ENCODE measurements at regions of chr15 and their contacts with region 1.

Region 1: GRCh38 chr15:66946578-66947164 is 118.7 kb upstream of the SMAD3 start:
- DNase-seq: peak; percentile 89
- ATAC-seq: peak; percentile 94
- H3K4me3 ChIP-seq: peak overlapping the region in 1 of 5 experiments; percentile 46
- H3K4me3 Mint-ChIP-seq: no peak overlapping the region
- H3K27ac ChIP-seq: no peak overlapping the region
- H3K27ac Mint-ChIP-seq: peak overlapping the region; percentile 61
- H3K4me1 ChIP-seq: peaks cover 3 to 12% of the 10 kb centered on the region in 2 donors
- H3K4me1 Mint-ChIP-seq: peaks cover 12% of the 10 kb centered on the region
- H3K27me3 ChIP-seq: no peaks in the 10 kb centered on the region
- H3K27me3 Mint-ChIP-seq: peaks cover 5% of the 10 kb centered on the region
- CTCF ChIP-seq: peak; percentile 87

Region 2: DNA sequence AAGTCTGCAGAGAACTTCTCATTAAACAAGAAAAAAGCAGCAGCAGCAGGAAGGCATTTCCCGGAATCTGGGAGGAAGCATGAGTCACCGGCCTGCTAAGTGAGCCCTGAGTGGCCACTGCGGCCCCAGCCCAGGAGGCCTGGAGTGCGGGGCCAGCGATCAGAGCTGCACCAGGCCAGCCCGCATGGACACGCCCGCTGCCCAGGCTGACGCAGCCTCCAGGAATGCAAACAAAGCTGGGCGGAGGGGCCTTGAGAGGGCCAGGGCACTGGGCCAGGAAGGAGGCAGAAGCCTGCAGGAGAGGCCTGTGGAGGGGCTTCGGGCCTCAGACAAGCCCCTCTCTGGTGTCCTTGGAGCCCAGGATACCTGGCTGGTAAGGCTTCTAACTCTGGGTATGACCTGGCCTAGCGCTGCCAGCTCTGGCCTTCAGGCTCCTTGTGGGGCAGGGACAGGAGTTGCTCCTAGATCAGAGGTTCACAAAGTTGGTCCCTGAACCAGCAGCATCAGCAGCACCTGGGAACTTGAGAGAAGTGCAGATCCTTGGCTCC is 143.4 kb before region 1 on chr15:
- CTCF ChIA-PET with region 1: no interaction called
- POLR2A ChIA-PET with region 1: no interaction called
- intact Hi-C with region 1: no loop called
- DNase-seq: no peak
- ATAC-seq: no peak
- H3K4me3 ChIP-seq: no peak overlapping the region
- H3K4me3 Mint-ChIP-seq: no peak overlapping the region
- H3K27ac ChIP-seq: no peak overlapping the region
- H3K27ac Mint-ChIP-seq: no peak overlapping the region
- H3K4me1 ChIP-seq: no peaks in the 10 kb centered on the region
- H3K4me1 Mint-ChIP-seq: no peaks in the 10 kb centered on the region
- H3K27me3 ChIP-seq: peaks cover 0 to 7% (median 0%) of the 10 kb centered on the region in 4 experiments
- H3K27me3 Mint-ChIP-seq: peaks cover 12% of the 10 kb centered on the region
- CTCF ChIP-seq: no peak

Region 3: GRCh38 chr15:66931768-66932633 is 14.7 kb before region 1 on chr15:
- CTCF ChIA-PET with region 1: no interaction called
- POLR2A ChIA-PET with region 1: no interaction called
- intact Hi-C with region 1: no loop called
- DNase-seq: no peak
- ATAC-seq: no peak
- H3K4me3 ChIP-seq: no peak overlapping the region
- H3K4me3 Mint-ChIP-seq: no peak overlapping the region
- H3K27ac ChIP-seq: no peak overlapping the region
- H3K27ac Mint-ChIP-seq: no peak overlapping the region
- H3K4me1 ChIP-seq: peaks cover 0 to 7% of the 10 kb centered on the region in 2 donors
- H3K4me1 Mint-ChIP-seq: no peaks in the 10 kb centered on the region
- H3K27me3 ChIP-seq: peaks cover 0 to 13% (median 2%) of the 10 kb centered on the region in 4 experiments
- H3K27me3 Mint-ChIP-seq: peaks cover 14% of the 10 kb centered on the region
- CTCF ChIP-seq: no peak

Region 4: DNA sequence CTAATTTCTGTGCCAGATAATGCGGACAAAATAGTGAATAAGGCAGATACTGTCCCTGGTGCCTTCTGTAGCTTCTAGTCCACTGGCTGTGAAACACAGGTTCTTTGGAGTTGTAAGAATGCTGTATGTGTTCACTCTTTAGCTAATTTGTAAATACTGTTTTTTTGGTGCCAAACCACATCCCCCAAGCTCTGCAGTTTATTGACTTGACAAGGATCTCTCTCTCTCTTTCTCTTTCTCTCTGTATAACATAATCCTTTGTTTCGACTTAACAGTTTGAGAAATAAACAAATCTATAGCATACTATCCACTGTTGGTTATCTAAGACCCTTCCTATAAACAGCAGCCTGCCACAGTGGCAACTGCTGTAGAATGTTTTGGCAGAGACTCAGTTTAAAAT is 126.3 kb after region 1 on chr15:
- CTCF ChIA-PET with region 1: interaction called, 11 read pairs
- POLR2A ChIA-PET with region 1: no interaction called
- intact Hi-C with region 1: no loop called
- DNase-seq: no peak
- ATAC-seq: no peak
- H3K4me3 ChIP-seq: no peak overlapping the region
- H3K4me3 Mint-ChIP-seq: peak overlapping the region; percentile 40
- H3K27ac ChIP-seq: peak overlapping the region; percentile 26 to 82
- H3K27ac Mint-ChIP-seq: peak overlapping the region; percentile 75
- H3K4me1 ChIP-seq: peaks cover 84 to 87% of the 10 kb centered on the region in 2 donors
- H3K4me1 Mint-ChIP-seq: peaks cover 91% of the 10 kb centered on the region
- H3K27me3 ChIP-seq: no peaks in the 10 kb centered on the region
- H3K27me3 Mint-ChIP-seq: no peaks in the 10 kb centered on the region
- CTCF ChIP-seq: no peak

Region 5: DNA sequence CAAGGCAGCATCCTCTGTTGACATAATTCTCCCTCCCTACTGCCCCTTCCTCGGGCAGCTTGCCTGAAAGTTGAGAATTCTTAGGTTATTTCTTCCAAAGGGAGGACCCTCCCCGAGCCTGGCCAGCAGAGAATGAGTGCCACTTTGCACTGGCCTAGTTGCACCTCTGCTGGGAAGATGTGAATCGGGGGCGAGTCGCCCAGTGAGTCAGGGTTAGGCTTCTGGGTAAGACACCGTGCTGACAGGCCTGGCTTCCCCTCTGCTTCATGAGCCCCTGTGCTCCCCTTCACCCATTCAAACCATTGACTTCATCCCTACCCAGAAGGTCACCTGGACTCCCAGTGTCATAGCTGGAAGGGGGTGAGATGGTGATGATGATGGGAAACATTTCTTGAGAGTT is 225.5 kb after region 1 on chr15:
- CTCF ChIA-PET with region 1: interaction called, 10 read pairs
- POLR2A ChIA-PET with region 1: no interaction called
- intact Hi-C with region 1: no loop called
- DNase-seq: no peak
- ATAC-seq: no peak
- H3K4me3 ChIP-seq: no peak overlapping the region
- H3K4me3 Mint-ChIP-seq: no peak overlapping the region
- H3K27ac ChIP-seq: no peak overlapping the region
- H3K27ac Mint-ChIP-seq: peak overlapping the region; percentile 7
- H3K4me1 ChIP-seq: peaks cover 0 to 21% of the 10 kb centered on the region in 2 donors
- H3K4me1 Mint-ChIP-seq: peaks cover 45% of the 10 kb centered on the region
- H3K27me3 ChIP-seq: no peaks in the 10 kb centered on the region
- H3K27me3 Mint-ChIP-seq: no peaks in the 10 kb centered on the region
- CTCF ChIP-seq: no peak

Region 6: DNA sequence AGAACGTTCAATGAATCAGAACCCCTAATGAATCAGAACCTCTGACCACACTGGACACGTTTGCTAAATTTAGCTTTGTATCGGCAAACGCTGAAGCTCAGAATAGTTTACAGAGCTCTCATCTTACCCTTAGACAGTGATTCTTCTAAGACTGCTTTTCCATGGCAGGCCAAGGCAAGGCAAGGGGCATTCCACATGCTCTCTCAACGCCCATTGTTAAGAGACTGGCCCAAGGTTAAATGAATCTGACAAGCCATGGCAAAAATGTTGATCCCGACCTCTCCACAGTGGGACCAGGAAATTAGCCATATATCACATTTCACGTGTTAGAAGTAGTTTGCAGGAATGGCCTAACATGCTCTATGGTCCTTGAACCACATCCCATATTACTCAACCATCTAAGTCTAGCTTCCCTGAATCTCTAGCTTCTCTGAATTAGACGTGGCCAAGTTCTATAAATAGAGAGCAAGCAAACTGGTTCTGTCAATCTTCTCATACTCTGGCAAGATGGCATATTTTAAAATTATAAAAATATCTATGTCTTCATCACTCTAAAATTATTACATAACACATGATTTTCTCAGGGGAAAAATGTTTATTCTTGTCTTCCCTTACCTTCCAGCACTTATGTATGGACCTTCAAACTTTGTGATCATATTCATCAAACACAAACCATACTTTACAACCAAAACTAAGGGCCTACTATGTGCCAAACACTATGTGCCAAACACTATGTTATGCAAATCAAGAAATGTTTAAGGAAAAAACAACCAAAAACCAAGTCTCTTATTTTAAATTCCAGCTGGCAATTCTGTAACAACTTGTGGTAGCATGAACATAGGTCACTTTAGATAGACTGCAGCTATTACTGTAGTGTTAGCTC is 253.5 kb after region 1 on chr15:
- CTCF ChIA-PET with region 1: interaction called, 6 read pairs
- POLR2A ChIA-PET with region 1: no interaction called
- intact Hi-C with region 1: loop called (anchors 10 kb)
- DNase-seq: no peak
- ATAC-seq: no peak
- H3K4me3 ChIP-seq: no peak overlapping the region
- H3K4me3 Mint-ChIP-seq: no peak overlapping the region
- H3K27ac ChIP-seq: no peak overlapping the region
- H3K27ac Mint-ChIP-seq: no peak overlapping the region
- H3K4me1 ChIP-seq: peaks cover 6 to 13% of the 10 kb centered on the region in 2 donors
- H3K4me1 Mint-ChIP-seq: peaks cover 22% of the 10 kb centered on the region
- H3K27me3 ChIP-seq: no peaks in the 10 kb centered on the region
- H3K27me3 Mint-ChIP-seq: no peaks in the 10 kb centered on the region
- CTCF ChIP-seq: no peak

Region 7: GRCh38 chr15:67280217-67280616 is 333.5 kb after region 1 on chr15:
- CTCF ChIA-PET with region 1: no interaction called
- POLR2A ChIA-PET with region 1: no interaction called
- intact Hi-C with region 1: no loop called
- DNase-seq: no peak
- ATAC-seq: no peak
- H3K4me3 ChIP-seq: no peak overlapping the region
- H3K4me3 Mint-ChIP-seq: no peak overlapping the region
- H3K27ac ChIP-seq: no peak overlapping the region
- H3K27ac Mint-ChIP-seq: no peak overlapping the region
- H3K4me1 ChIP-seq: no peaks in the 10 kb centered on the region
- H3K4me1 Mint-ChIP-seq: no peaks in the 10 kb centered on the region
- H3K27me3 ChIP-seq: peaks cover 0 to 2% (median 0%) of the 10 kb centered on the region in 4 experiments
- H3K27me3 Mint-ChIP-seq: peaks cover 13% of the 10 kb centered on the region
- CTCF ChIP-seq: no peak

Region 8: GRCh38 chr15:67296188-67296587 is 349.5 kb after region 1 on chr15:
- CTCF ChIA-PET with region 1: interaction called, 256 read pairs
- POLR2A ChIA-PET with region 1: no interaction called
- intact Hi-C with region 1: no loop called
- DNase-seq: no peak
- ATAC-seq: no peak
- H3K4me3 ChIP-seq: no peak overlapping the region
- H3K4me3 Mint-ChIP-seq: peak overlapping the region; percentile 26
- H3K27ac ChIP-seq: no peak overlapping the region
- H3K27ac Mint-ChIP-seq: no peak overlapping the region
- H3K4me1 ChIP-seq: peaks cover 13% of the 10 kb centered on the region in 2 donors
- H3K4me1 Mint-ChIP-seq: peaks cover 16% of the 10 kb centered on the region
- H3K27me3 ChIP-seq: no peaks in the 10 kb centered on the region
- H3K27me3 Mint-ChIP-seq: no peaks in the 10 kb centered on the region
- CTCF ChIP-seq: no peak

Region 9: GRCh38 chr15:67433495-67434099 is 486.9 kb after region 1 on chr15:
- CTCF ChIA-PET with region 1: interaction called, 108 read pairs
- POLR2A ChIA-PET with region 1: no interaction called
- intact Hi-C with region 1: loop called (anchors 1 kb)
- DNase-seq: peak; percentile 37
- ATAC-seq: peak; percentile 45
- H3K4me3 ChIP-seq: no peak overlapping the region
- H3K4me3 Mint-ChIP-seq: no peak overlapping the region
- H3K27ac ChIP-seq: no peak overlapping the region
- H3K27ac Mint-ChIP-seq: no peak overlapping the region
- H3K4me1 ChIP-seq: no peaks in the 10 kb centered on the region
- H3K4me1 Mint-ChIP-seq: no peaks in the 10 kb centered on the region
- H3K27me3 ChIP-seq: no peaks in the 10 kb centered on the region
- H3K27me3 Mint-ChIP-seq: no peaks in the 10 kb centered on the region
- CTCF ChIP-seq: peak; percentile 70

Region 10: GRCh38 chr15:67850995-67851571 is 904.4 kb after region 1 on chr15:
- CTCF ChIA-PET with region 1: no interaction called
- POLR2A ChIA-PET with region 1: no interaction called
- intact Hi-C with region 1: no loop called
- DNase-seq: no peak
- ATAC-seq: no peak
- H3K4me3 ChIP-seq: no peak overlapping the region
- H3K4me3 Mint-ChIP-seq: no peak overlapping the region
- H3K27ac ChIP-seq: no peak overlapping the region
- H3K27ac Mint-ChIP-seq: peak overlapping the region; percentile 54
- H3K4me1 ChIP-seq: peaks cover 3 to 15% of the 10 kb centered on the region in 2 donors
- H3K4me1 Mint-ChIP-seq: peaks cover 19% of the 10 kb centered on the region
- H3K27me3 ChIP-seq: peaks cover 0 to 8% (median 4%) of the 10 kb centered on the region in 4 experiments
- H3K27me3 Mint-ChIP-seq: peaks cover 10% of the 10 kb centered on the region
- CTCF ChIP-seq: no peak